GM12878 (cell line): ENCODE measurements at regions of chr16 and their contacts with region 1.

Region 1: DNA sequence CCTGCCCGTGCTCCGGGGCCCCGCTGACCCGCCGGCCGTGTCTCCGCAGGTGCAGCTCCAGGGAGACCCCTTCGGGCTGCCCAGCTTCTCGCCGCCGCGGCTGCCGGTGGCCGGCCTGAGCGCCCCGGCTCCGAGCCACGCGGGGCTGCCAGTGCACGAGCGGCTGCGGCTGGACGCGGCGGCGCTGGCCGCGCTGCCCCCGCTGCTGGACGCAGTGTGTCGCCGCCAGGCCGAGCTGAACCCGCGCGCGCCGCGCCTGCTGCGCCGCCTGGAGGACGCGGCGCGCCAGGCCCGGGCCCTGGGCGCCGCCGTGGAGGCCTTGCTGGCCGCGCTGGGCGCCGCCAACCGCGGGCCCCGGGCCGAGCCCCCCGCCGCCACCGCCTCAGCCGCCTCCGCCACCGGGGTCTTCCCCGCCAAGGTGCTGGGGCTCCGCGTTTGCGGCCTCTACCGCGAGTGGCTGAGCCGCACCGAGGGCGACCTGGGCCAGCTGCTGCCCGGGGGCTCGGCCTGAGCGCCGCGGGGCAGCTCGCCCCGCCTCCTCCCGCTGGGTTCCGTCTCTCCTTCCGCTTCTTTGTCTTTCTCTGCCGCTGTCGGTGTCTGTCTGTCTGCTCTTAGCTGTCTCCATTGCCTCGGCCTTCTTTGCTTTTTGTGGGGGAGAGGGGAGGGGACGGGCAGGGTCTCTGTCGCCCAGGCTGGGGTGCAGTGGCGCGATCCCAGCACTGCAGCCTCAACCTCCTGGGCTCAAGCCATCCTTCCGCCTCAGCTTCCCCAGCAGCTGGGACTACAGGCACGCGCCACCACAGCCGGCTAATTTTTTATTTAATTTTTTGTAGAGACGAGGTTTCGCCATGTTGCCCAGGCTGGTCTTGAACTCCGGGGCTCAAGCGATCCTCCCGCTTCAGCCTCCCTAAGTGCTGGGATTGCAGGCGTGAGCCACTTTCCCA is 5.9 kb downstream of the CTF1 start:
- DNase-seq: no peak
- ATAC-seq: peak; percentile 90
- H3K4me3 ChIP-seq: peak overlapping the region; percentile 58; the same call in 1 of the 2 replicates
- H3K27ac ChIP-seq: peak overlapping the region; percentile 46; the same call in 1 of the 2 replicates
- H3K4me1 ChIP-seq: peaks cover 27% of the 10 kb centered on the region
- H3K27me3 ChIP-seq: no peaks in the 10 kb centered on the region
- CTCF ChIP-seq: peak; percentile 14 to 59 (median 37); a peak in 3 of 6 replicates
- EP300 ChIP-seq: no peak
- POLR2A ChIP-seq: peak; percentile 70
- RAD21 ChIP-seq: peak; percentile 46

Region 2: DNA sequence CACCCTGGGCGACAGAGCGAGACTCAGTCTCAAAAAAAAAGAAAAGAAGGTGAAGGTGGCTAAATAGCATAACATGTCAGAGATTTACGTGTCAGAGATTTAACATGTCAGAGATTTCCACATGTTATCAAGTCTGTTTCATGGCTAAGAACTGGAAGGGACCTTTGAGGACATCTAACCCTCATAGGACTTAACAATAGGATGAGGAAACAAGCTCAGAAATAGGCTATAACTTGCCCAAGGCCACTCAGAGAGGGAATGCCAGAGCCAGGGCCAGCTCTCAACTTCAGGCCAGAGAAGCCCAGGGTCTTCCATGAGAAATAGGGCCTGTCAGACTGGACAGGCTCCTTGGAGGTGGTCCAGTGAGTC is 88.5 kb before region 1 on chr16:
- CTCF ChIA-PET with region 1: interaction called, 21 read pairs
- POLR2A ChIA-PET with region 1: interaction called, 4 read pairs
- RAD21 ChIA-PET with region 1: interaction called, 8 read pairs
- SMC1A ChIA-PET with region 1: no interaction called
- in situ Hi-C with region 1: no loop called
- intact Hi-C with region 1: no loop called
- DNase-seq: peak; percentile 7
- ATAC-seq: no peak; the same call in 2 of the 3 replicates
- H3K4me3 ChIP-seq: peak overlapping the region; percentile 58
- H3K27ac ChIP-seq: peak overlapping the region; percentile 84
- H3K4me1 ChIP-seq: peaks cover 9% of the 10 kb centered on the region
- H3K27me3 ChIP-seq: no peaks in the 10 kb centered on the region
- CTCF ChIP-seq: no peak
- EP300 ChIP-seq: no peak
- POLR2A ChIP-seq: no peak
- RAD21 ChIP-seq: no peak

Region 3: GRCh38 chr16:30853758-30854157 is 48.5 kb before region 1 on chr16:
- CTCF ChIA-PET with region 1: interaction called, 18 read pairs
- POLR2A ChIA-PET with region 1: interaction called, 4 read pairs
- RAD21 ChIA-PET with region 1: interaction called, 11 read pairs
- SMC1A ChIA-PET with region 1: interaction called, 23 read pairs
- in situ Hi-C with region 1: no loop called
- intact Hi-C with region 1: no loop called
- DNase-seq: no peak
- ATAC-seq: no peak
- H3K4me3 ChIP-seq: no peak overlapping the region
- H3K27ac ChIP-seq: no peak overlapping the region
- H3K4me1 ChIP-seq: no peaks in the 10 kb centered on the region
- H3K27me3 ChIP-seq: no peaks in the 10 kb centered on the region
- CTCF ChIP-seq: no peak
- EP300 ChIP-seq: no peak
- POLR2A ChIP-seq: no peak
- RAD21 ChIP-seq: no peak

Region 4: DNA sequence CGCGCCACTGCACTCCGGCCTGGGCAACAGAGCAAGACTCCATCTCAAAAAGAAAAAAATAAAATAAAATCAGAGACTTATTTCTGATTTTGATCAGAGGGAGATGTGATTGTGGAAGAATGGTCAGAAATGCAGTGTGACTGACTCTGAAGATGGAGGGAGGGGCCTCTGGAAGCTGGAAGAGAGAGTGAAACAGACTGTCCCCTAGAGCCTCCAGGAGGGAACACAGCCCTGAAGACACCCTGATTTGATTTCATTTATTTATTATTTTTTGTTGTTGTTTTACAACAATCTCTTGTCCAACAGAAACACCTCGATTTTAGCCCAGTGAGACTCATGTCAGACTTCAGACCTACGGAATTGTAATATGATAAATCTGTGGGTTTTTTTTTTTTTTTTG is 34.6 kb before region 1 on chr16:
- CTCF ChIA-PET with region 1: interaction called, 14 read pairs
- POLR2A ChIA-PET with region 1: interaction called, 6 read pairs
- RAD21 ChIA-PET with region 1: interaction called, 16 read pairs
- SMC1A ChIA-PET with region 1: interaction called, 7 read pairs
- in situ Hi-C with region 1: no loop called
- intact Hi-C with region 1: no loop called
- DNase-seq: no peak
- ATAC-seq: peak; percentile 59; the same call in 2 of the 3 replicates
- H3K4me3 ChIP-seq: no peak overlapping the region
- H3K27ac ChIP-seq: no peak overlapping the region
- H3K4me1 ChIP-seq: peaks cover 10% of the 10 kb centered on the region
- H3K27me3 ChIP-seq: no peaks in the 10 kb centered on the region
- CTCF ChIP-seq: 0 out of 6 replicates have a peak, but pooled peaks of 1 of the 3 experiments have one; percentile 10
- EP300 ChIP-seq: no peak
- POLR2A ChIP-seq: no peak
- RAD21 ChIP-seq: no peak

Region 5: GRCh38 chr16:30874821-30875717 is 27.2 kb before region 1 on chr16:
- CTCF ChIA-PET with region 1: interaction called, 14 read pairs
- POLR2A ChIA-PET with region 1: interaction called, 11 read pairs
- RAD21 ChIA-PET with region 1: interaction called, 16 read pairs
- SMC1A ChIA-PET with region 1: interaction called, 7 read pairs
- in situ Hi-C with region 1: no loop called
- intact Hi-C with region 1: no loop called
- DNase-seq: peak; percentile 64
- ATAC-seq: peak; percentile 87
- H3K4me3 ChIP-seq: peak overlapping the region; percentile 76
- H3K27ac ChIP-seq: peak overlapping the region; percentile 93
- H3K4me1 ChIP-seq: peaks cover 22% of the 10 kb centered on the region
- H3K27me3 ChIP-seq: no peaks in the 10 kb centered on the region
- CTCF ChIP-seq: no peak
- EP300 ChIP-seq: no peak
- POLR2A ChIP-seq: peak; percentile 99
- RAD21 ChIP-seq: no peak

Region 6: GRCh38 chr16:30941600-30942425 is 39.5 kb after region 1 on chr16:
- CTCF ChIA-PET with region 1: interaction called, 30 read pairs
- POLR2A ChIA-PET with region 1: interaction called, 7 read pairs
- RAD21 ChIA-PET with region 1: interaction called, 7 read pairs
- SMC1A ChIA-PET with region 1: interaction called, 6 read pairs
- in situ Hi-C with region 1: no loop called
- intact Hi-C with region 1: no loop called
- DNase-seq: no peak
- ATAC-seq: peak; percentile 99
- H3K4me3 ChIP-seq: no peak overlapping the region
- H3K27ac ChIP-seq: no peak overlapping the region
- H3K4me1 ChIP-seq: peaks cover 9% of the 10 kb centered on the region
- H3K27me3 ChIP-seq: no peaks in the 10 kb centered on the region
- CTCF ChIP-seq: peak; percentile 94 to 99 (median 95)
- EP300 ChIP-seq: no peak
- POLR2A ChIP-seq: no peak
- RAD21 ChIP-seq: peak; percentile 67

Region 7: GRCh38 chr16:31238041-31238440 is 335.7 kb after region 1 on chr16:
- CTCF ChIA-PET with region 1: no interaction called
- POLR2A ChIA-PET with region 1: no interaction called
- RAD21 ChIA-PET with region 1: no interaction called
- SMC1A ChIA-PET with region 1: no interaction called
- in situ Hi-C with region 1: no loop called
- intact Hi-C with region 1: no loop called
- DNase-seq: no peak
- ATAC-seq: no peak
- H3K4me3 ChIP-seq: no peak overlapping the region
- H3K27ac ChIP-seq: no peak overlapping the region
- H3K4me1 ChIP-seq: no peaks in the 10 kb centered on the region
- H3K27me3 ChIP-seq: no peaks in the 10 kb centered on the region
- CTCF ChIP-seq: no peak
- EP300 ChIP-seq: no peak
- POLR2A ChIP-seq: no peak
- RAD21 ChIP-seq: no peak